GM12878 (cell line): ENCODE measurements at regions of chr1 and their contacts with region 1.

Region 1: DNA sequence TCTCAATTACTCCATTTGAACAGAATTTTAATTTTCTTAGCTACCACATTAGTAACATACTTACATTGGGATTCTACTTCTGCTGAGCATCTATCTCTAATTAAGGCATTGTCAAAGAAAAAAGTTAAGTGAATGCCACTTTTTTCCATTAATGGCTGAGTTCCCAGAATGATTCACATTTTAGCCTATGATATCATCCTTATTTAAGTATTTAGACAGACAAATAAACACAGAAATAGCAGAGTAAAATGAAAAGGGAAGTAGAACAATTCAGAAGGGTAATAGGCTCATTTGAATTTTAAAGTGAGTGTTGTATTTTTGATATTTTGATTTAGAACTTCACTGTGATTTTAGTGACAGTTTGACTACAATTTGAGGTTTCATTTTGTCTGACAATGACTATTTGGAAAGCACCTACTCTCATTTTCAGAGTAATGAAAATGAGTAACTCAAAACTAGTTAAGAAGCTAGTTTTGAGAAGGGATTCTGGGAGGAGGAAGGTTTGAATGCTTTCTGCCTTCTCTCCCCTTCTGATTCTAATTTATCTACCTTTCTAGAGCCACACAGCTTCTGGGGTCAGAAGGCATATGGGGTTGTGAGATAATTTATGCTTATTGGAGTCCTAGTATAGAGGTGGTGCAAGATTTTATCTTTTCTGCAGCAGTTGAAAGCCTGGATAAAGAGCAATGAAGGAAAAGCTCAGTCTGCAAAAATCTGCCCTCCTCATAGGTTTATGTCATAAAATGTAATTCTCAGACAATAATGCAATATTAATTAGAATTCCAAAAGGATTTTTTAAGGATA is 15.5 kb downstream of the LYPLAL1 start:
- DNase-seq: peak; percentile 69
- ATAC-seq: peak; percentile 77
- H3K4me3 ChIP-seq: peak overlapping the region; percentile 38
- H3K27ac ChIP-seq: peak overlapping the region; percentile 87
- H3K4me1 ChIP-seq: peaks cover 13% of the 10 kb centered on the region; the same call in 1 of the 2 replicates
- H3K27me3 ChIP-seq: no peaks in the 10 kb centered on the region
- CTCF ChIP-seq: no peak
- EP300 ChIP-seq: peak; percentile 76 to 90
- POLR2A ChIP-seq: no peak
- RAD21 ChIP-seq: no peak

Region 2: DNA sequence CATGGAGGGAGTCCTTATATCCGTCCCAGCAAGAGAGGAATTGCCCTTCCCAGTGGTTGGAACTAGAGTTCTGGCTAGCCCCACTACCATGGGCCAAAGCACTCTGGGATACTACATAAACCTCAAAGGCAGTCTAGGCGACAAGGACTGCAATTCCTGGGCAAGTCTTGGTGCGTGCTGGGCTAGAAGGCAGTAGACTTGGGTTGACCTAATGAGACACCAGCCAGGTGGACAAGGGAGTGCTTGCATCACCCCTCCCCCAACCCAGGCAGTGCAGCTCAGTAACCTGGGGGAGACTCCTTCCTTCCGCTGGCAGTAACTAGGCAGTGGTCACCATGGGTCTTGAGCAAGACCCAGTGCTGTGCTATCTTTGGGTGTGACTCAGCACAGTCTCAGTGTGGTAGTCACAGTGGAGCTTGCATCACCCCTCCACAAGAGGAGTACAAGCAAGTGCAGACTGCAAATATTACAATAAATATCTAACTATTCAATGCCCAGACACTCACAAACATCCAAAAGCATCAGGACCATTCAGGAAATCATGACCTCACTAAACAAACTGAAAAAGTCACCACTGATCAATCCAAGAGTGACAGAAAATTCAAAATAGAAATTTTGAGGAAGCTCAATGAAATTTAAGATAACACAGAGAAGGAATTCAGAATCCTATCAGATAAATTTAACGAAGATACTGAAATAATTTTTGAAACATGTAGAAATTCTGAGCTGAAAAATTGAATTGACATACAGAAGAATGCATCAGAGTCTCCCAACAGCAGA is 100.3 kb before region 1 on chr1:
- CTCF ChIA-PET with region 1: interaction called, 6 read pairs
- POLR2A ChIA-PET with region 1: interaction called, 4 read pairs
- RAD21 ChIA-PET with region 1: interaction called, 34 read pairs
- SMC1A ChIA-PET with region 1: interaction called, 12 read pairs
- in situ Hi-C with region 1: no loop called
- intact Hi-C with region 1: loop called (anchors 2 kb)
- DNase-seq: peak; percentile 61
- ATAC-seq: peak; percentile 93
- H3K4me3 ChIP-seq: no peak overlapping the region
- H3K27ac ChIP-seq: no peak overlapping the region
- H3K4me1 ChIP-seq: peaks cover 21% of the 10 kb centered on the region
- H3K27me3 ChIP-seq: no peaks in the 10 kb centered on the region
- CTCF ChIP-seq: no peak
- EP300 ChIP-seq: no peak
- POLR2A ChIP-seq: no peak
- RAD21 ChIP-seq: no peak

Region 3: GRCh38 chr1:219173758-219174588 is 15.2 kb before region 1 on chr1 and contains the start of gene LYPLAL1:
- CTCF ChIA-PET with region 1: interaction called, 74 read pairs
- POLR2A ChIA-PET with region 1: interaction called, 98 read pairs
- RAD21 ChIA-PET with region 1: interaction called, 134 read pairs
- SMC1A ChIA-PET with region 1: interaction called, 173 read pairs
- in situ Hi-C with region 1: no loop called
- intact Hi-C with region 1: loop called (anchors 2 kb)
- DNase-seq: peak; percentile 78
- ATAC-seq: peak; percentile 72
- H3K4me3 ChIP-seq: peak within 1 kb of the TSS; percentile 93
- H3K27ac ChIP-seq: peak within 1 kb of the TSS; percentile 93
- H3K4me1 ChIP-seq: peaks cover 9% of the 10 kb centered on the region
- H3K27me3 ChIP-seq: no peaks in the 10 kb centered on the region
- CTCF ChIP-seq: peak; percentile 17 to 21 (median 21); a peak in 3 of 6 replicates
- EP300 ChIP-seq: peak in 1 of 2 experiments; percentile 8; a peak in 1 of 4 replicates
- POLR2A ChIP-seq: peak; percentile 99
- RAD21 ChIP-seq: no peak
- polyA plus RNA-seq, gene LYPLAL1: 97.0 to 112 TPM

Region 4: GRCh38 chr1:219209578-219209977 is 20.4 kb after region 1 on chr1:
- CTCF ChIA-PET with region 1: interaction called, 5 read pairs
- POLR2A ChIA-PET with region 1: no interaction called
- RAD21 ChIA-PET with region 1: interaction called, 7 read pairs
- SMC1A ChIA-PET with region 1: interaction called, 24 read pairs
- in situ Hi-C with region 1: no loop called
- intact Hi-C with region 1: no loop called
- DNase-seq: no peak
- ATAC-seq: no peak
- H3K4me3 ChIP-seq: no peak overlapping the region
- H3K27ac ChIP-seq: no peak overlapping the region
- H3K4me1 ChIP-seq: no peaks in the 10 kb centered on the region
- H3K27me3 ChIP-seq: no peaks in the 10 kb centered on the region
- CTCF ChIP-seq: no peak
- EP300 ChIP-seq: no peak
- POLR2A ChIP-seq: no peak
- RAD21 ChIP-seq: no peak

Region 5: GRCh38 chr1:219227360-219228057 is 38.3 kb after region 1 on chr1:
- CTCF ChIA-PET with region 1: no interaction called
- POLR2A ChIA-PET with region 1: no interaction called
- RAD21 ChIA-PET with region 1: no interaction called
- SMC1A ChIA-PET with region 1: no interaction called
- in situ Hi-C with region 1: no loop called
- intact Hi-C with region 1: no loop called
- DNase-seq: no peak
- ATAC-seq: no peak
- H3K4me3 ChIP-seq: no peak overlapping the region
- H3K27ac ChIP-seq: no peak overlapping the region
- H3K4me1 ChIP-seq: no peaks in the 10 kb centered on the region
- H3K27me3 ChIP-seq: no peaks in the 10 kb centered on the region
- CTCF ChIP-seq: no peak
- EP300 ChIP-seq: no peak
- POLR2A ChIP-seq: no peak
- RAD21 ChIP-seq: no peak

Region 6: DNA sequence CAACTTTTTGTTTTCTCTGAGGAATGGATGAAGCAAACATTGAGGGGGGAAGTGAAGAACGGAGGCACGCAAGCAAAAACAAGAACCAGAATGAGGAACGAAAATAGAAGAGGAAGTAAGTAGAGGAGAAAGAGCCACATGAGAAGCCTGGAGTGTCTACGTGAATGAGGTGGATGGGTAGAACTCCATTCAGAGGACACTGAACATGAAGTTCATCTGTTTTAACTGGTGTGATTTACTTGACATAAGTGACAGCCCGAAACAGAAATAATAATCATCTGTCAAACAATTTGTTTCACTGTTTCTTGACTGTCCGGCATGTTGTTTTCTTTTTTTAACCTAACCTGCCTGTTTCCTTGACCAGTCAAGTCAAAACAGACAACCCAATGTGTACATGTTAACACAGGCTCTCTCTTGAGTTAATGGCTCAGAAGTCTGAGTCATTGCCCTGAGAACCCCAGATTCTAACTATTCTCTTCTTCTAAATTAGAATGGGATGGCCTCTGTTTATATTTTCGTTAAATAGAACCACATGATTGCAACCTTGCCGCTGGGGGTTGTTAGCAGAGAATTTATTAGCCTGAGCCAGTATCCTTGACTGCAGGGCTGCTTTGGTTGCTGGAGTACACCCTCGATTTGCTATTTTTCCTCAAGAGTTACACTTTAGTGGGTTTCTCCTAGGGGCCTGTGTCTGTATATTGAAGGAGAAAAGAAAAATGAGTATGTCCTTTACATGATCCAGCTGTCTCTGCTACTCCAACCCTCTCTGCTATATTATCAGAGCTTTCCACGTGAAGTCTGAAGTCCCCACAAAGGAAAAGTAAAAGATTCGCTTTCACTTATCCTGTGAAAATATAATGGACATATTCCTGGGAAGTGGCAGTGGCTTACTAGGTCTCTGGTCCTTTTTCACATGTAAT is 271.9 kb after region 1 on chr1:
- CTCF ChIA-PET with region 1: no interaction called
- POLR2A ChIA-PET with region 1: no interaction called
- RAD21 ChIA-PET with region 1: no interaction called
- SMC1A ChIA-PET with region 1: no interaction called
- in situ Hi-C with region 1: no loop called
- intact Hi-C with region 1: loop called (anchors 5 kb)
- DNase-seq: peak; percentile 79
- ATAC-seq: peak; percentile 86
- H3K4me3 ChIP-seq: peak overlapping the region; percentile 28; the same call in 1 of the 2 replicates
- H3K27ac ChIP-seq: peak overlapping the region; percentile 90
- H3K4me1 ChIP-seq: peaks cover 46% of the 10 kb centered on the region
- H3K27me3 ChIP-seq: no peaks in the 10 kb centered on the region
- CTCF ChIP-seq: no peak
- EP300 ChIP-seq: peak in 1 of 2 experiments; percentile 76; a peak in 1 of 4 replicates
- POLR2A ChIP-seq: no peak
- RAD21 ChIP-seq: peak; percentile 33